ENCODE measurements at regions of chr3 and their contacts with region 1.

Region 1: GRCh38 chr3:99468918-99469317 is 169.5 kb upstream of the COL8A1 start:
- DNase-seq: no peak
- CTCF ChIP-seq: no peak

Region 2: DNA sequence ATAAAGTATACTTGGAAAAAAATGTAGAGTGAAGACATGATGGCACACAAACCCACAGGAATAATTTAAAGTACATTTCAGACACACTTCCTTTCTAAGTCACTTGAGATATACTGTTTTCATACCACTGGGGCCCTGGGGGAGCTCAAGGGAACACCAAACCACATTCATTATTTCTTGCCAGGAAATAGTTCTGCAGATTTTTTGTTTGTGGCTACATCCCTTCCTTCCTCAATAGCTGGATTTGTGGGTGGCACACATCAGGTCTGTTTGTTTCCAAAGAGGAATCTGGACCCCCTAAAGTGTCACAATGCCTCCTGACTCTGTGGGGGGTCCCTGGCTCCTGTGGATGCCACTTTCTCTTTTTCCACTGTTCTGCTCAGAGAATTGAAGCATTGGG is 16.0 kb after region 1 on chr3:
- CTCF ChIA-PET with region 1: interaction called, 31 read pairs
- POLR2A ChIA-PET with region 1: no interaction called
- DNase-seq: no peak
- CTCF ChIP-seq: no peak